Panc1 (cell line): ENCODE measurements at regions of chr10 and their contacts with region 1.

Region 1: DNA sequence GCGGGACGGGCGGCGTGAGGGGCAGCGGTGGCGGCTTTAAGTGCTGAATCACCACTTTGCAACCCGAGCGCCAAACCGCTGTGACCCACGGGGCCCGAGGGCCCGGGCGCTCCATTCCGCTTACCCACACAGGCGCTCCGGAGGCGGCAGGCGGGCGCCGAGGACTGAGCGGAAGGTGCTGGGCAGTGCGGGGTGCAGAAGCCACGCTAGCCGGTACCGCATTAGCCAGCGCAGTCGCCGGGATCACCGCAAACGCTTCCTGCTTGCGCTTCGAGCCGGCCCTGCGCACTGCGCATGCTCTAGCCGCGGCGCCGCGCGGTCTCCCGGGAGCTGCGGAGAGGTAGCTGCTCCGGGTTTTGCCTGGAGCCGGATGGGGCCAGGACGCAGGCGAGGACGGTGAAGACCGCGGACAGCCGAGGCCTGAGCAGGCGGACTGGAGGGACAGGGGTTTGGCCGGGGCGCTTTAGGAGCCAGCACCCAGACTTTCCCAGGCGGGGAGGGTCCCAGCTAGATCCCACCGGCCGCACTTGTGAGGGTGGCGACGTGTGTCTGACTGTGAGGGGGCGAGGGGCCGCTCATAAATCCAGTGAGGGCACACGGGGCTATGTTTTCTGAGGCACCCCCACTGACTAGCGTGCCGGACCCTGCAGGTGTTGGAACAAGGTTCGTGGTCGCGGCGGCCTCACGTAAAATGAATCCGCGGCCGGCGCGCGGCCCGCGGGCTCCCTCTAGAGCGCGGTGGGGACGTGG is at the start of gene IDE:
- DNase-seq: no peak
- ATAC-seq: peak; percentile 90
- H3K4me3 ChIP-seq: peak within 1 kb of the TSS; percentile 81 to 93
- H3K27ac ChIP-seq: peak within 1 kb of the TSS; percentile 91
- H3K4me1 ChIP-seq: peaks cover 20% of the 10 kb centered on the region
- H3K27me3 ChIP-seq: no peaks in the 10 kb centered on the region
- CTCF ChIP-seq: peak; percentile 99
- total RNA-seq, gene IDE: 79.0 TPM

Region 2: DNA sequence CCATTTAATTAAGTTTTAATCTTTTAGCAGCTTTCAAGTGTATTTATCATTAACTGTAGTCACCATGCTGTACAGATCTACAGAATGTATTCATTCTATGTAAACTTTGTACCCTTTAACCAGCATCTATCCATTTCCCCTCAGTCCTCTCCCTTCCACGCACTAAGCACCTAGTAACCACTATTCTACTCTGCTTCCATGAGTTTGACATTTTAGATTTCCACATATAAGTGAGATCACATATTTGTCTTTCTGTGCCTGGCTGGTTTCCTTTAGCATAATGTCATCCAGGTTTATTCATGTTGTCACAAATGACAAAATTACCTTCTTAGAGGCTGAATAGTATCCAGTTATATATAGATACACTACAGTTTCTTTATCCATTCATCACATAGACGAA is 570.7 kb before region 1 on chr10:
- CTCF ChIA-PET with region 1: no interaction called
- POLR2A ChIA-PET with region 1: no interaction called
- in situ Hi-C with region 1: no loop called
- intact Hi-C with region 1: no loop called
- DNase-seq: no peak
- ATAC-seq: no peak
- H3K4me3 ChIP-seq: no peak overlapping the region
- H3K27ac ChIP-seq: no peak overlapping the region
- H3K4me1 ChIP-seq: no peaks in the 10 kb centered on the region
- H3K27me3 ChIP-seq: no peaks in the 10 kb centered on the region
- CTCF ChIP-seq: no peak

Region 3: GRCh38 chr10:92517034-92517655 is 56.8 kb before region 1 on chr10:
- CTCF ChIA-PET with region 1: interaction called, 24 read pairs
- POLR2A ChIA-PET with region 1: no interaction called
- in situ Hi-C with region 1: no loop called
- intact Hi-C with region 1: loop called (anchors 1 kb)
- DNase-seq: peak; percentile 55
- ATAC-seq: peak; percentile 97
- H3K4me3 ChIP-seq: no peak overlapping the region
- H3K27ac ChIP-seq: no peak overlapping the region
- H3K4me1 ChIP-seq: no peaks in the 10 kb centered on the region
- H3K27me3 ChIP-seq: no peaks in the 10 kb centered on the region
- CTCF ChIP-seq: peak; percentile 87

Region 4: GRCh38 chr10:92641492-92641891 is 67.5 kb after region 1 on chr10:
- CTCF ChIA-PET with region 1: no interaction called
- POLR2A ChIA-PET with region 1: interaction called, 10 read pairs
- in situ Hi-C with region 1: no loop called
- intact Hi-C with region 1: no loop called
- DNase-seq: no peak
- ATAC-seq: no peak
- H3K4me3 ChIP-seq: no peak overlapping the region
- H3K27ac ChIP-seq: no peak overlapping the region
- H3K4me1 ChIP-seq: peaks cover 7% of the 10 kb centered on the region
- H3K27me3 ChIP-seq: no peaks in the 10 kb centered on the region
- CTCF ChIP-seq: no peak